Calu3 (cell line): ENCODE measurements at regions of chr1 and their contacts with region 1.

Region 1: GRCh38 chr1:99808391-99809115 is 41.6 kb upstream of the AGL start:
- DNase-seq: peak; percentile 41
- H3K4me3 Mint-ChIP-seq: no peak overlapping the region
- H3K27ac Mint-ChIP-seq: no peak overlapping the region
- H3K4me1 Mint-ChIP-seq: no peaks in the 10 kb centered on the region
- H3K27me3 Mint-ChIP-seq: no peaks in the 10 kb centered on the region
- CTCF ChIP-seq: peak; percentile 34

Region 2: DNA sequence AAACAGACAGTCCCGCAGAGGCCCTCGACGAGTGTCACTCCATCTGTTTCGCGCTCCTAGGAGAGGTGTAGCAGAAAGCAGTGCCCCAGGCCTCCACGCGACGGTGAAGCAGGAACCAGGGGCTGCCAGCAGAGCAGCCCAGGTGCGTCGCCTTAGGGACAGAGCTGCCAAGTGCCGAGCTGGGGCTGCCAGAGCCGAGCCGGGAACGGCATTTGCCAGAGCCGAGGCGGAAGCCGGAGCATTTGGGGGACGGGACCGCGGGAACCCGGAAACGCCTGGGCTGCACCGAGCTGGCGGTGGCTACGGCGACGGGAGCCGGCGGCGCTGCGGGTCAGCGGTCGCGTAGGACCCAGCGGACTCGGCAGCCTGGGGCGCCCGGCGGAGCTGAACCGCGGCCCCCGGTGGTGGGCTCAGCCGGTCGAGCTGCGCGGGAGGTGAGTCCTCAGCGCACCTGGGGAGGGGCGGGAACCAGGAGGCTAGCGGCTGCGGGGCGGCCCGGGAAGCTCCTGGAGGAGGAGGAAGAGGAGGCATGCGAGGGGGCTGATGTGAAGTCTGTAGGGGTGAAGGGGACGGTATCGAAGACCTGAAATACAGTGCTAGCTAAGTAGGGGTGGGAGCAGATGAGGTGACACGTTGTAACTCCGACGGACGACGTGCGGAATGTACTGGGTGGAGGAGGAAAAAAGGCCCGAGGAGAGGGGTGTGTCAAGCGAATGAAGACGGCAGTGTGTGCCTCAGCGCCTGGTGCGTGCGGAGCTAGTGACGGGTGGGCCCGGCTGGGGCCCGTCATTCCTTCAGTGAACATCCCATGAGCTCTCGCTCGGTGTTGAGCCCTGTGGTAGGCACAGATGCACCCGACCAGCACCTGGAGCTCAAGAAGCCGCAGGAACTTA is 161.4 kb after region 1 on chr1 and contains the start of gene SLC35A3:
- CTCF ChIA-PET with region 1: no interaction called
- intact Hi-C with region 1: no loop called
- DNase-seq: peak; percentile 88
- H3K4me3 Mint-ChIP-seq: peak within 1 kb of the TSS; percentile 98
- H3K27ac Mint-ChIP-seq: peak within 1 kb of the TSS; percentile 88
- H3K4me1 Mint-ChIP-seq: peaks cover 17% of the 10 kb centered on the region
- H3K27me3 Mint-ChIP-seq: no peaks in the 10 kb centered on the region
- CTCF ChIP-seq: no peak
- total RNA-seq, gene SLC35A3: 31.2 and 33.9 TPM in 2 replicates

Region 3: DNA sequence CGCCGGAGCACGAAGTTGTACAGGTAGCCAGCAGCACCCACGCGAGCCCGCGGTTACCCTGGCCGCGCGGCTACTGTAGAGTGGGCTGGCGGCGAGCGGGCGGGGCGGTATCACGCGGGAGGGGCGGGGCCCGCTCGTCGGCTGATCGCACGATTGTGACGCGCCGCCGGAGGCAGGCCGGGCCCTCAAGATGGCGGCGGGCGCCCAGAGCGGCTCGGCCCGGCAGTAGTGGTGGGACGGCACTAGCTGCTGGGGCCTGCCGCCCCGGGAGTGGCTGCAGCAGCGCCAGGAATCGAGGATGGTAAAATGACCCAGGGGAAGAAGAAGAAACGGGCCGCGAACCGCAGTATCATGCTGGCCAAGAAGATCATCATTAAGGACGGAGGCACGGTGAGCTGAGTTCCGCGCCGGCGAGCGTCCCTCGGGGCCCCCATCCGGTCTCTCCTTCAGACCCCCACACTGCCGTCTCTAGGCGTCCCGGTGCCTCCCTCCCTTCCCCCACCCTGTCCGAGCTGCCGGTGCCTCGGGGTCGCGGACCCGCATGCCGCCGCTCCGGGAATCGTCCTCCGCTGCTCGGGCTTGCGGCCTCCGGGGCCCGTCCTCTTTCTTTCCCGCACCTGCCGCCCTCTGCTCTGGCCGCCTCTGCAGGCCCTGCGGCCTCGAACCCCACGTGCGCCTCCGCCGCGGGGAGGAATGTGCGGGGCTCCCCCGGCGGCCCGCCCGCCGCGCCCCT is 229.5 kb after region 1 on chr1:
- CTCF ChIA-PET with region 1: no interaction called
- intact Hi-C with region 1: loop called (anchors 2 kb)
- DNase-seq: peak; percentile 85
- H3K4me3 Mint-ChIP-seq: peak overlapping the region; percentile 90
- H3K27ac Mint-ChIP-seq: peak overlapping the region; percentile 94
- H3K4me1 Mint-ChIP-seq: no peaks in the 10 kb centered on the region
- H3K27me3 Mint-ChIP-seq: no peaks in the 10 kb centered on the region
- CTCF ChIP-seq: no peak

Region 4: DNA sequence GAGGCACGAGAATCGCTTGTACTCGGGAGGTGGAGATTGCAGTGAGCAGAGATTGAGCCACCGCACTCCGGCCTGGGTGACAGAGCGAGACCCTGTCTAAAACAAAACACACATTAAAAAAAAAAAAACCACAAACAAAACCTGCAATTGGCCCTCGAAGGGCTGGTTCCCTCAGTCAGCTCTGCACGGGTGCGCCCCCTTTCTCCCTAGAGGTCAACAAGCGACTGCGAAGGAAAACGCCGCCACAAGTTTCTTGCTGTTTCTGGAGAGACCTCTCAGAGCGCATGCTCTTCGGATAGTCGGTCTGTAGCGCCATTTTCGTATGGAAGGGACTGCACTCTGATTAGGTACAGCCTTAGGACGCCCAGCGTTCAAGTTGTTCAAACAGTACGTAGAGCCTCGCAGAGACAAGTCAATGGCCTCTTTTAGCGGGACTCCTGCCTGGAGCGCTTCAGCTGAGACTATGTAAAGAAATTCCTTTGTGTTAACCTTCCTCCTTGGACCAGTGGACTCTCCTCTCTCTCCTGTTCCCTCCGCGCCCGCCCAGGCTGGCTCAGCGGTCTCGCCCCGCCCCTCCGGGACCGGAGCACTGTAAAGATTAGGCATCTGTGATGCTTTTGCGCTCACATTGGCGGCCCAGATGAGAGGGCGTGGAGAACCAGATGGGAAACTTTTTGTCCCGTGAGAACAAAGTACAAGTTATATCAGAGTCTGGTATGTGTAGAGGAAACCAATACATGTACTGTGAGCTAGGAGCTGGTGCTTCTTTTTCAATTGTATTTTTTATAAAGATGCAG is 542.7 kb after region 1 on chr1:
- CTCF ChIA-PET with region 1: no interaction called
- intact Hi-C with region 1: loop called (anchors 5 kb)
- DNase-seq: peak; percentile 84
- H3K4me3 Mint-ChIP-seq: peak overlapping the region; percentile 91
- H3K27ac Mint-ChIP-seq: peak overlapping the region; percentile 92
- H3K4me1 Mint-ChIP-seq: peaks cover 24% of the 10 kb centered on the region
- H3K27me3 Mint-ChIP-seq: no peaks in the 10 kb centered on the region
- CTCF ChIP-seq: peak; percentile 34

Region 5: DNA sequence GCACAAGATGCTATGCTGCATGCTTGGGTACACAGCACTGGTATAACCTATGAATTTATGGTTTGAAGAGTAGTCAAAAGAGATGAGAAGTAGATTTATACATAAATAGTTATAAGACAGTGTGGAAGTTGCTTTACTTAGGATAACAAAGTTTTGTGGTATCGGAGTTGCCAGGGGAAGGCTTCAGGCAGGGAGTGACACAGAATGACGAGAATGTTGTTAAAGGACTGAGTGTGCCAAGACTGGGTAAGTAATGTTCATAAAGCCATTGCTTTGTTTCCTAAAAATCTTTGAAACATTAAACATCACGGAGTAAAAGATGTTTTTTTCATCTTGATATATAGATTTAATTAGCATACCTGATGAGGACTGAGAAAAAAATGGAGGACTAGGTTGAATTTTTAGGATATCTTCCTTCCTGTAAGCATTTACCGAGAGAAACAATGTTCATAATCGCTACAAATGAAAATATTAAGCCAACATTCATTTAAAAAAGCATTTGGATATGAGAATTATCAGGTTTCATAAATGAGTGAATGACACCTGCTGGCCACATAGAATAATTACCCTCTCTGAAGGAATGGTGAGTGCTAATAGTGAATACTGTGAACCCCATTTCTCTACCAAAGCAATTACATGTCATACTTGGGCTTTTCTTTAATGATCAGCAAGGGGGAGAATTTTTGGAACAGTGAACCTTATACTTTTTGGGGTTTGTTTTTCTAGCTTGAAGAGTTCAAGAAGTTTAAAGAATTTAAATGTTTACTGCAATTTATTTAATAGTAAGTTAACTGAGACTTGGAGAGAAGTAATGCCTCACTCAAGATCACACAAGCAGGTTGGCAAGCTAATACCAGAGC is 1057.7 kb after region 1 on chr1:
- CTCF ChIA-PET with region 1: no interaction called
- intact Hi-C with region 1: loop called (anchors 5 kb)
- DNase-seq: no peak
- H3K4me3 Mint-ChIP-seq: no peak overlapping the region
- H3K27ac Mint-ChIP-seq: no peak overlapping the region
- H3K4me1 Mint-ChIP-seq: no peaks in the 10 kb centered on the region
- H3K27me3 Mint-ChIP-seq: no peaks in the 10 kb centered on the region
- CTCF ChIP-seq: peak; percentile 19